ENCODE measurements at regions of chr9 and their contacts with region 1.

Region 1: GRCh38 chr9:72592502-72593403 is 71.3 kb downstream of the TMC1 start:
- DNase-seq: peak; percentile 50
- H3K4me3 Mint-ChIP-seq: no peak overlapping the region
- H3K27ac Mint-ChIP-seq: no peak overlapping the region
- H3K4me1 Mint-ChIP-seq: peaks cover 24% of the 10 kb centered on the region
- H3K27me3 Mint-ChIP-seq: peaks cover 9% of the 10 kb centered on the region

Region 2: GRCh38 chr9:72280913-72281500 is 311.7 kb before region 1 on chr9:
- CTCF ChIA-PET with region 1: interaction called, 27 read pairs
- POLR2A ChIA-PET with region 1: no interaction called
- DNase-seq: peak; percentile 71
- H3K4me3 Mint-ChIP-seq: no peak overlapping the region
- H3K27ac Mint-ChIP-seq: no peak overlapping the region
- H3K4me1 Mint-ChIP-seq: peaks cover 4% of the 10 kb centered on the region
- H3K27me3 Mint-ChIP-seq: peaks cover 2% of the 10 kb centered on the region

Region 3: GRCh38 chr9:72563806-72564205 is 28.9 kb before region 1 on chr9:
- CTCF ChIA-PET with region 1: no interaction called
- POLR2A ChIA-PET with region 1: no interaction called
- DNase-seq: no peak
- H3K4me3 Mint-ChIP-seq: no peak overlapping the region
- H3K27ac Mint-ChIP-seq: no peak overlapping the region
- H3K4me1 Mint-ChIP-seq: no peaks in the 10 kb centered on the region
- H3K27me3 Mint-ChIP-seq: peaks cover 8% of the 10 kb centered on the region